A673 (cell line): ENCODE measurements at regions of chr1 and their contacts with region 1.

Region 1: GRCh38 chr1:236581528-236581927 is 22.8 kb downstream of the HEATR1 start:
- DNase-seq: no peak
- H3K4me3 ChIP-seq: no peak overlapping the region
- H3K27ac ChIP-seq: no peak overlapping the region
- H3K4me1 ChIP-seq: no peaks in the 10 kb centered on the region
- H3K27me3 ChIP-seq: no peaks in the 10 kb centered on the region
- CTCF ChIP-seq: no peak

Region 2: DNA sequence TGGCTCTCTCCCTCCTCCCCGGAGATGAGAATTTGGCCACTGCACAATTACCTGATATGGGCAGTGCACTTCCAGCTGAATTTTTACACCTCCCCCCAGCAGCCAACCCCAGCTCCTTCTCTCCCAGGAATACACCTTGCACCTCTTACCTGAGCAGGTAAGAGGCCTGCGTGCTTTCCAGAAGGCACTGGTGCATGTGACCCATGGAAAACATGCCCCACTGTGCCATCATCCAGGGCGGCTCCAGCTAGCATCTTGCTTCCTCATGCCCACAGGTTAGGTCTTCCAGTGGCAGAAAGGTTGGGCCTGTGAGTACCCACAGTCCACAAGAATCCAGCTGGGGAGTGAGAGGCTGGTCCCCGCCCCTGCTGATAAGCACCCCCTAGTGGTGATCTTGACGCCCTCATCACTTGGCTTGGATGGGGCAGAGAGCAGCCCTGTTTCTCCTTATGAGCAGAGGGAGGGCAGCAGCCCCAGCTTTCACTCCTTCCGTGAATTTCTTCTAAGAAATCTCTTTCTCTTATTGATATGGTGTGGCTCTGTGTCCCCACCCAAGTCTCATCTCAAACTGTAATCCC is 129.6 kb before region 1 on chr1:
- CTCF ChIA-PET with region 1: interaction called, 14 read pairs
- POLR2A ChIA-PET with region 1: no interaction called
- intact Hi-C with region 1: no loop called
- DNase-seq: peak; percentile 37
- H3K4me3 ChIP-seq: no peak overlapping the region
- H3K27ac ChIP-seq: no peak overlapping the region
- H3K4me1 ChIP-seq: no peaks in the 10 kb centered on the region
- H3K27me3 ChIP-seq: no peaks in the 10 kb centered on the region
- CTCF ChIP-seq: peak; percentile 58